ENCODE measurements at regions of chr2 and their contacts with region 1.

Region 1: DNA sequence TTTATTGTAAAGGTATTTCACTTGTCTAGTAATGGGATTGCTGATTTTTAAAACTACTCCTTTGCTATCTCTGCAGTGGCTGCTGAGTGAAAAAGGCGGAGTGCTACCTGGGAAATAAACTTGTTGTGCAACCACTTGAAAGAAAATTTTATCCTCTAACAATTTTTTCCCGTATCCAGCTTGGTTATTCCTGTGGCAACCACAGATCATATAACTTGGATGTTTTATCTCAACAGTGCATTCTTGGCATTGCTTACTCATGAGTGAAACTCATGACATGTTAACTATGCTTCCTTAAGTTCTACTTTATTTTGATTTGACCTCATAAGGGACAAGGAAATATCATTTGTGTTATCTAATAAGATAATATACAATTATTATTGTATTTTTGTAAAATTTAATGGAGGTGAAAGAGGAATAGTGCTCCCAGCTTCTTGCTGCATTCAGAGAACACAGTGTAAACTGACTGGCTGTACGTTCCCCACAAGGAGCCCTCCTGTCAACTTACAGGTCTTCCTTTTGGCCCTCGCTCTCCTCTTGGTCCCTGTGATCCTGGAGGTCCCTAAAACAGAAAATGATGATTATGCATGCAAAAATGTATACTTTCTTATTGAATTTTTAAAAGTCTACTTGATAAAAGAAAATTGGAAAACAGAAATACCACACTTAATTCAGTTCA is 82.7 kb downstream of the COL5A2 start:
- DNase-seq: no peak
- ATAC-seq: no peak
- H3K4me3 ChIP-seq: no peak overlapping the region
- H3K27ac ChIP-seq: no peak overlapping the region
- H3K4me1 ChIP-seq: peaks cover 0 to 8% of the 10 kb centered on the region in 2 donors
- H3K27me3 ChIP-seq: no peaks in the 10 kb centered on the region
- CTCF ChIP-seq: no peak
- POLR2A ChIP-seq: no peak

Region 2: DNA sequence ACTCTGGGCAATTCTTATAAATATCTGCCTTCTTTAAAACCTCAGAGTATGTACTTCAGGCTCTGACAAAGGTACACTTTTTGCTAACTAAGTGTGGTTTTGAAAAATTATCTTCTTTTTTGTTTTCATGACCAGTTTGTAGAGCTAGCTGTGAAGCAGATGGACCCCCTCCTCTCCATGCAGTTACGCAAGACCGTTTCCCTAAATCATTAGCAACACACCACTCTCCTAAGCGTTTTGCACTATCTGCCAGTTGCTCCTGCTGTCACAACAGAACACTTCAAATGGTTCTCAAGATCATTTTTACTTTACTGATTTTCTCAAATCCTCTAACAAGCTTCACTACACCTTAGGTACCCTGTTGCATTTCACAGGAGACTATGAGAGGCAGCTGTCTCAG is 751.9 kb before region 1 on chr2:
- in situ Hi-C with region 1: no loop called
- intact Hi-C with region 1: no loop called
- DNase-seq: no peak
- ATAC-seq: no peak
- H3K4me3 ChIP-seq: no peak overlapping the region
- H3K27ac ChIP-seq: no peak overlapping the region
- H3K4me1 ChIP-seq: peaks cover 0 to 5% of the 10 kb centered on the region in 2 donors
- H3K27me3 ChIP-seq: no peaks in the 10 kb centered on the region
- CTCF ChIP-seq: no peak
- POLR2A ChIP-seq: no peak

Region 3: DNA sequence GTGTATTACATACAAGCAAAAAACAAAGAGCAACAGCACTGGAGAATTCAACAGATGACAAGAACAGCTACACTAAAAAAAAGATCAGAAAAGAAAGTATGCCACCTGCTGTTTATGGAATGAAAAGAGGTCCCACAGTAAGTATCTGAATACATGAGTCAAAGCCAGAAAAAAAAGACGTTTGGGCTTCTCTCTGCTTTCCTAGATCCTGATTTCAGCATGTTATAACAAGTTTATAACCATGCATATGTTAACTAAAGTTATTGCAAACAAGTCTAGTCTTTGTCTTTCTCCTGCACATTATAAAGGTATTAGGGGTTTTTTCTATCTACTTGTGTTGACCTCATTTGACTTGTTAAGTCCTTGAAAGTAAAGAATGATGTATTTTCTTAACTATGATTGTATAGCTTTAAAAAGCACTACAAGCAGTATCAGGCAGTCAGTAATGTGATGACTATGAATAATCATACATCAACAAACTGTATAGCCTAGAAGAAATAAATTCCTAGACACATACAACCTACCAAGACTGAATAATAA is 191.1 kb after region 1 on chr2:
- in situ Hi-C with region 1: loop called in 3 of 4 experiments (anchors 10 to 25 kb)
- intact Hi-C with region 1: loop called (anchors 1 kb)
- DNase-seq: no peak
- ATAC-seq: peak in 1 of 2 donors; percentile 66
- H3K4me3 ChIP-seq: no peak overlapping the region
- H3K27ac ChIP-seq: no peak overlapping the region
- H3K4me1 ChIP-seq: no peaks in the 10 kb centered on the region
- H3K27me3 ChIP-seq: no peaks in the 10 kb centered on the region
- CTCF ChIP-seq: peak in 4 of 5 experiments; percentile 37 to 57 (median 40)
- POLR2A ChIP-seq: no peak

Region 4: DNA sequence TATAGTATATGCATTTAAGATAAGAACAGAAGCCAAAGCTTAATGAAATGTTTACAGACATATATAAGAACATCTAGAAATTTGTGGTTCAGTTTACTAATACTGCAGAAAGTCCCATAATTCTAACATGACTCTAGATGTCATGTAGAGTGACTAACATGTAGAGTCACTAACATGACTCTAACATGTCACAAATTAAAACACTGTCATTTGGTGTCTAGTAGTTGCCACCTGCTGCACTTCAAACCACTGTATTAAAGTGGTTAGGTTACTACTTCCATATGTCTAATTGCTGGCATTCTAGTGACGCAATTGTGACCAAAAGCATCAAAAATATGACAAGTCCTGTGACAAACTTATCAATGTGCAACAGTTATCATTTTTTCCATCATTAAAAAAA is 244.2 kb after region 1 on chr2:
- in situ Hi-C with region 1: loop called in 1 of 4 experiments (anchors 5 kb)
- intact Hi-C with region 1: loop called (anchors 5 kb)
- DNase-seq: no peak
- ATAC-seq: no peak
- H3K4me3 ChIP-seq: no peak overlapping the region
- H3K27ac ChIP-seq: no peak overlapping the region
- H3K4me1 ChIP-seq: no peaks in the 10 kb centered on the region
- H3K27me3 ChIP-seq: no peaks in the 10 kb centered on the region
- CTCF ChIP-seq: no peak
- POLR2A ChIP-seq: no peak

Region 5: GRCh38 chr2:189347540-189347939 is 250.6 kb after region 1 on chr2:
- in situ Hi-C with region 1: loop called in 1 of 4 experiments (anchors 5 kb)
- intact Hi-C with region 1: loop called (anchors 5 kb)
- DNase-seq: peak; percentile 52 to 59
- ATAC-seq: peak; percentile 91 to 94
- H3K4me3 ChIP-seq: no peak overlapping the region
- H3K27ac ChIP-seq: peak overlapping the region; percentile 44 to 70 (median 56)
- H3K4me1 ChIP-seq: peaks cover 13 to 23% of the 10 kb centered on the region in 2 donors
- H3K27me3 ChIP-seq: no peaks in the 10 kb centered on the region
- CTCF ChIP-seq: peak in 3 of 5 experiments; percentile 14 to 21 (median 20)
- POLR2A ChIP-seq: no peak

Region 6: GRCh38 chr2:189412330-189412953 is 315.5 kb after region 1 on chr2:
- in situ Hi-C with region 1: loop called (anchors 5 to 10 kb)
- intact Hi-C with region 1: loop called (anchors 1 kb)
- DNase-seq: no peak
- ATAC-seq: peak; percentile 60 to 82
- H3K4me3 ChIP-seq: no peak overlapping the region
- H3K27ac ChIP-seq: peak overlapping the region in 3 of 4 donors; percentile 42 to 51 (median 45)
- H3K4me1 ChIP-seq: peaks cover 7 to 12% of the 10 kb centered on the region in 2 donors
- H3K27me3 ChIP-seq: no peaks in the 10 kb centered on the region
- CTCF ChIP-seq: peak; percentile 46 to 87 (median 70)
- POLR2A ChIP-seq: no peak